GM18951 (cell line): ENCODE measurements at regions of chr2 and their contacts with region 1.

Region 1: GRCh38 chr2:235135990-235136561 is 184.3 kb downstream of the SH3BP4 start:
- POLR2A ChIP-seq: no peak

Region 2: GRCh38 chr2:235230821-235231601 is 94.9 kb after region 1 on chr2:
- in situ Hi-C with region 1: no loop called
- POLR2A ChIP-seq: no peak

Region 3: GRCh38 chr2:235244255-235245220 is 108.5 kb after region 1 on chr2:
- in situ Hi-C with region 1: no loop called
- POLR2A ChIP-seq: no peak

Region 4: DNA sequence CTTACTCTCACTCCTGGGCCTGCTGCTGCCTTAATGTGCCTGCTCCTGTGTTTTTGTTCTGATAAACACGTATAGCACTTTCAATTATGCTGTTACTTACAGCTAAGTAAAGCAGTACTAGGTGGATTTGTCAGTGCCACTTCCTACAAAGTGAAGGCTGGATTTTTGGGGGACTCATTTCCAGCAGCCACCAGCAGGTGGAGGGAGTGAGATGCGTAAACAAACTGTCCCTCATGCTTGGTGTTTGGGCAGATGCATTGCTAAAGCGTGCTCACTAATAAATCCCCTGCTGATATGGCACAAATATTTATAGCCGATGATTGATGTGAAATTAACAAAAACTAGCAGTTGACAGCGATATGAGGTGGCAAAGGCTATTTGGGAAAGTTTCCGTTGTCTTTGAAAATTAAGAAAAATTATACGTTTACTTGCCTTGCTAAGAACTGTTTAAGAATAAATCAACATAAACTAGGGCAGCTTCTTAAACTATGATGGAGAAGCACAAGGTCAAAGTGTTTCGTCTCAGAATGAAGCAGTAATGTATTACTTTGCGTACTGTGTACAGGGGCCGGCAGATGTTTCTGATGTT is 459.4 kb after region 1 on chr2:
- in situ Hi-C with region 1: loop called (anchors 25 kb)
- POLR2A ChIP-seq: no peak

Region 5: DNA sequence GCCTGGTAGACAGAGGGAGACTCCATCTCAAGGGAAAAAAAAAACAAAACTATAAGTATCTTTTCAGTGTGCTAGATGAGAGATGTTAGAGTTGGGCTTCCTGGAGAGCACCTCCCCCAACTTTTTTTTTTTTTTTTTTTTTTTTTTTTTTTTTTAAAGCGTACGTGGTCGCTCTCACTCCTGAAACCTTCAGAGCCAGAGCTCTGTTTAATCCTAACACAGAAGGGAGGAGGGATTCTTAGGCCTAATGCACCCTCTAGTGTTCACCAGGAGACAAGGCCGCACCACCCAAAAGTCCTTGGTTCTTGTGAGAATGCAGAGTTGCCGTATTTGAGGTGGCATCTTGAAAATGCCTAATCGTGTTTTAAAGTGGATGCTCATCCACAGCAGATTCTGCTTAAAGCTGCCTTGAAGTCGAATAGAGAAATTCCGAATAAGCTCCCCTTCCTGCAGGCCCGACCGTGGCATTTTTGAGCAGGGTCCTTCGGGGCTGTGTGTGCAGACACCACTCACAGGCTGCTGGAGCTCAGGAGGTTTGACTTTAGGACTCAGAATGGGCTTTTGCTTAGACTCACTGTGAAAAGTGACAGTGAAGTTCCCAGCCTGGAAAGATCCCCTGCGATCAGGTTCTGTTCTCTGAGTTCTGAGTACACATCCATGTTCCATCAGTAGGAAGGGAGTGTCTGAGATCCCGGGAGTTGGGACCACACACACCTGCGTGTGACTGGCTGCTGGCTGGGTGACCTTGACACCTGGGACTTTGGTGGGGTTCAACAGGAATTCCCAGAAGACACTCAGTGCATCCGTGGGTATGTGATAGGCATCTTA is 610.4 kb after region 1 on chr2:
- in situ Hi-C with region 1: loop called (anchors 25 kb)
- POLR2A ChIP-seq: no peak